Activated CD8-positive, alpha-beta T cell treated with anti-CD3 and anti-CD28 coated beads for 36 hours (primary cell): ENCODE measurements at regions of chr3 and their contacts with region 1.

Region 1: DNA sequence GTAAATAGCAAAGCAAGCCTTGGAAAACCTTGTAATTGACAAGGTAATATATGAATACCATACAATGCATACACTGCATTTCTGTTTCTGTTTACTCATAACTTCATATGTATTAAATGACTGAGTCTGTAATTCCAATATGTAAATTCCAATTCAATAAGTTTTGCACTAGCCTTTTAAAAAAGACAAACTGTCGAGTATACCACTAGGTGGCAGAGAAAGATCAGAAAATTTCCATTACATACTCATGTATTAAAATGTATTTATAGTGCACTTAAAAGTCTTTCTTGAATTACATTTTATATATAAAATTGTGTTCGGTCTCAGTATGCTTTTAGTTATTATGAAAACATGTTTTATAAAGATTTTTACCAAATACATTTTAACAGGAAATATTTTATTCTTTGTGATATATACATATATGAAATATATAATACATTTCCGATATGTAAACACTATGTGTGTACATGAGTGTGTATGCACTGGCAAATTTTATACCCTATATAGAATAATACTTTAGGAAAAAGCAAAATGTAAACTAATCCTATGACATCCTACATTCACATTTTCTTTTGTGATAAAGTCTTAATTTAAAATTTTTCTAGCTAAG is 216.8 kb downstream of the VGLL3 start:
- DNase-seq: no peak
- ATAC-seq: no peak
- H3K4me3 Mint-ChIP-seq: no peak overlapping the region
- H3K27ac Mint-ChIP-seq: no peak overlapping the region
- H3K4me1 Mint-ChIP-seq: no peaks in the 10 kb centered on the region
- H3K27me3 Mint-ChIP-seq: no peaks in the 10 kb centered on the region
- CTCF ChIP-seq: peak; percentile 45

Region 2: DNA sequence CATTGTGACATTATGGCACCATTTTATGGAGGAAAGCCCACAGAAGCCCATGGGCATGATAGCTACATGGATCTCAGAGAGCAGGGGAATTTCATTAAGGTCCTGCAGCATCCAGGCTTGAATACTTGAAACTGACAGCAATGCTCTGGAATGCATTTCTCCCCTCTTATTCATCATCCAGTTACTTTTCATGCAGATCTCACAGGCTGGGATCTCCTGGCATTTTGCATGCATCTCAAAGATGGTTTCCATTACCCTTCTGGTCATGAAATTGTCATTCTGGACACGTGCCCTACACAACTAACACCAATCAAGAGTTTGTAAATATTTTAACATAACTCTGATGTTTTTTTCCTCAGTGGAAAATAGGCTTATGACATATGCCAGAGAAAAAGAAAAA is 184.3 kb after region 1 on chr3:
- CTCF ChIA-PET with region 1: no interaction called
- POLR2A ChIA-PET with region 1: no interaction called
- intact Hi-C with region 1: no loop called
- DNase-seq: no peak
- ATAC-seq: no peak
- H3K4me3 Mint-ChIP-seq: no peak overlapping the region
- H3K27ac Mint-ChIP-seq: no peak overlapping the region
- H3K4me1 Mint-ChIP-seq: no peaks in the 10 kb centered on the region
- H3K27me3 Mint-ChIP-seq: no peaks in the 10 kb centered on the region
- CTCF ChIP-seq: no peak

Region 3: GRCh38 chr3:87082796-87083440 is 308.7 kb after region 1 on chr3:
- CTCF ChIA-PET with region 1: no interaction called
- POLR2A ChIA-PET with region 1: no interaction called
- intact Hi-C with region 1: loop called (anchors 5 kb)
- DNase-seq: no peak
- ATAC-seq: no peak
- H3K4me3 Mint-ChIP-seq: no peak overlapping the region
- H3K27ac Mint-ChIP-seq: no peak overlapping the region
- H3K4me1 Mint-ChIP-seq: no peaks in the 10 kb centered on the region
- H3K27me3 Mint-ChIP-seq: no peaks in the 10 kb centered on the region
- CTCF ChIP-seq: no peak

Region 4: DNA sequence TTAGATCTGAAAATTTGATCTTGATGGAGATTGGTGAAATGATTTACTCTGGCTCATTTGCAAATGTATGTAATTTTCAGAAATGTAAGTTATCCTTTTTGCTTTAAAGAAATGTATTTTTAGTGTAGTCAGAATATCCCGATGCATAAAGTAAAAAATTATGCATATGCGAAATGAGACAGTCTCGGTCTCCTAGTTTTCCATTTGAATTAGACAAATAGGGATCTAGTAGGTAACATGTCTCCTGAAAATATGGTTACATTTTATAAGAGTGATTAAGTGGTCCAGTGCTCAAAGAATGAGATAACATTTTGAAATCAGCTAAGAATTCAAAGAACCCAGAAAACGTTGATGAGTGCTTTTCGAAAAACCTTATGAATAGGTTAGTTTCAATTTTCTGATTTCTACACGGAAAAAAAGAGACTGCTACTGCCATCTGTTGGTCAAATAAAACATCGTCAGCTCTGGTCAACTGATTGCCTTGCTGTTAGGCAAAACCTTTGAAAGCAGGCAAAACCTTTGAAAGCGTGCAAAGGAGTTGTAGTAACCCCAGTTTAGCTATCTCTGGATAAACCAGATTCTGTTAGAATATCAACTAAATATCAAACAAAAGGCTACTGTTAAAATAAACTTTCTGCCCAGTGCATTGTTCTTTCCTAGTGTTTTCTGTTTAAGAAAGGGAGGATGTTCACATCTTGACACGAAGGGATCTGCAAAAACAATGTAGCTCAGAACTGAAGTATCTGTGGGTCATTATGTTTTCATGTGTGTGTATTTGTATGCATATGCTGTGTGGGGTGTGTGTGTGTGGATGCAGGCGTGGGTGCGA is 393.7 kb after region 1 on chr3:
- CTCF ChIA-PET with region 1: interaction called, 5 read pairs
- POLR2A ChIA-PET with region 1: no interaction called
- intact Hi-C with region 1: loop called (anchors 10 kb)
- DNase-seq: peak; percentile 43
- ATAC-seq: peak; percentile 61
- H3K4me3 Mint-ChIP-seq: no peak overlapping the region
- H3K27ac Mint-ChIP-seq: no peak overlapping the region
- H3K4me1 Mint-ChIP-seq: peaks cover 3% of the 10 kb centered on the region
- H3K27me3 Mint-ChIP-seq: peaks cover 7% of the 10 kb centered on the region
- CTCF ChIP-seq: peak; percentile 63